Caco-2 (cell line): ENCODE measurements at regions of chr2 and their contacts with region 1.

Region 1: DNA sequence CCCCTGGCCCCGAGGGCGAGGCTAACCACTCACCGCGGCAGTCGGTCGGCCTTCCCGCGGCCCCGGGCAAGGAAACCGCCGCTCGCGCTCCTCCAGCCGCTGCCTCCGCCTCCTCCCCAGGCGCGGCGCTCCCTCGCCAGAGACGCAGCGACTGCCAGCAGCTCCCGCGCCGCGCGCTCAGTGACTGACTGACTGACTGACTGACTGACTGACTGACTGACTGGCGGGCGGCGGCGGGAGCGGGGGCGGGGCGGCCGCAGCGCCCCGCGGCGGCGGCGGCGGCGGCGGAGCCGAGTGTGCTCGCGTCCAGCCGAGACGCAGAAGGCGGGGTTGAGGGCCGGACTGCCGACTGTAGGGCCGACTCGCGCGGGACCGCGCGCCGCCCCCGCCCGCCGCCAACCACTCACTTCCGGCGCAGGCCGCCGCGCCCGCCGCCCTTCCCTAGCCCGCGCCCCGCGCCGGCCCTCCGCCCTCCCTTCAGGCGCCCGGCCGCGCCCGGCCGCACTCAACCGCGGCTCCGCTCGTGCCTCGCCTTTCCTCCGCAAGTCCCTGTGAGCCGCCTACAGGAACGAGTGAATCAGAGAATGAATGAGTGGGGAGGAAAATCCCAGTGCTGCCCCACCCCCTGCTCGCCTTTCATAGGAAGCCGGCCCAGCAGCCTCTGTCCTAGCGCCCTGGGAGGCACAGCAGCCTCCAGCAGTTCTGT is at the start of gene RAPH1:
- DNase-seq: peak; percentile 92
- H3K4me3 ChIP-seq: peak within 1 kb of the TSS; percentile 84
- H3K4me3 Mint-ChIP-seq: peak within 1 kb of the TSS; percentile 97
- H3K27ac Mint-ChIP-seq: peak within 1 kb of the TSS; percentile 36
- H3K4me1 ChIP-seq: peaks cover 4% of the 10 kb centered on the region; the same call in 1 of the 2 replicates
- H3K4me1 Mint-ChIP-seq: peaks cover 14% of the 10 kb centered on the region
- H3K27me3 ChIP-seq: no peaks in the 10 kb centered on the region
- H3K27me3 Mint-ChIP-seq: no peaks in the 10 kb centered on the region
- CTCF ChIP-seq: no peak
- total RNA-seq, gene RAPH1: 109 and 114 TPM in 2 replicates

Region 2: DNA sequence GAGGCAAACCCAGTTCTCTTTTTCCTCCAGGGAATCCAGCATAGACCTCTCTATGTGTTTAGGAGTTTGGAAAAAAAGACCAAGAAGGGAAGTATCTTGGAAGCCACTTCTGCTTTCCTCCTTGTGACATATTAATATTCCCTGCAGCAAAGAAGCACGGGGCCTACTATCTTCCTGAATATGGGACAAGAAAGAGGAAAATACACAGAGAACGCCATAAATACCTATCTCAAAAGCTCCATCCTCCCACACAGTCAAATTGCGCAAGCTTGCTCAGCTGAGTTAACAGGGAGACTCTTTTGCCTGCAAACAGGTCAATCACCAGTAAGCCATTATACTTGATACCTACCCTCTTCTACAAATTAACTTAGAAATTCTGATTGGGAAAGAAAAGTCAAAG is 16.5 kb after region 1 on chr2:
- CTCF ChIA-PET with region 1: no interaction called
- POLR2A ChIA-PET with region 1: no interaction called
- intact Hi-C with region 1: loop called (anchors 1 kb)
- DNase-seq: peak; percentile 87 to 95
- H3K4me3 ChIP-seq: no peak overlapping the region
- H3K4me3 Mint-ChIP-seq: peak overlapping the region; percentile 57
- H3K27ac Mint-ChIP-seq: peak overlapping the region; percentile 55
- H3K4me1 ChIP-seq: peaks cover 26% of the 10 kb centered on the region
- H3K4me1 Mint-ChIP-seq: peaks cover 22% of the 10 kb centered on the region
- H3K27me3 ChIP-seq: no peaks in the 10 kb centered on the region
- H3K27me3 Mint-ChIP-seq: no peaks in the 10 kb centered on the region
- CTCF ChIP-seq: no peak

Region 3: GRCh38 chr2:203578759-203579643 is 43.8 kb after region 1 on chr2:
- CTCF ChIA-PET with region 1: no interaction called
- POLR2A ChIA-PET with region 1: no interaction called
- intact Hi-C with region 1: loop called (anchors 1 kb)
- DNase-seq: peak; percentile 89 to 92
- H3K4me3 ChIP-seq: no peak overlapping the region
- H3K4me3 Mint-ChIP-seq: peak overlapping the region; percentile 4
- H3K27ac Mint-ChIP-seq: peak overlapping the region; percentile 88
- H3K4me1 ChIP-seq: peaks cover 30% of the 10 kb centered on the region
- H3K4me1 Mint-ChIP-seq: peaks cover 21% of the 10 kb centered on the region
- H3K27me3 ChIP-seq: no peaks in the 10 kb centered on the region
- H3K27me3 Mint-ChIP-seq: no peaks in the 10 kb centered on the region
- CTCF ChIP-seq: no peak

Region 4: GRCh38 chr2:203590496-203590895 is 55.3 kb after region 1 on chr2:
- CTCF ChIA-PET with region 1: no interaction called
- POLR2A ChIA-PET with region 1: no interaction called
- intact Hi-C with region 1: no loop called
- DNase-seq: no peak
- H3K4me3 ChIP-seq: no peak overlapping the region
- H3K4me3 Mint-ChIP-seq: no peak overlapping the region
- H3K27ac Mint-ChIP-seq: no peak overlapping the region
- H3K4me1 ChIP-seq: peaks cover 4% of the 10 kb centered on the region
- H3K4me1 Mint-ChIP-seq: peaks cover 14% of the 10 kb centered on the region
- H3K27me3 ChIP-seq: no peaks in the 10 kb centered on the region
- H3K27me3 Mint-ChIP-seq: no peaks in the 10 kb centered on the region
- CTCF ChIP-seq: no peak

Region 5: DNA sequence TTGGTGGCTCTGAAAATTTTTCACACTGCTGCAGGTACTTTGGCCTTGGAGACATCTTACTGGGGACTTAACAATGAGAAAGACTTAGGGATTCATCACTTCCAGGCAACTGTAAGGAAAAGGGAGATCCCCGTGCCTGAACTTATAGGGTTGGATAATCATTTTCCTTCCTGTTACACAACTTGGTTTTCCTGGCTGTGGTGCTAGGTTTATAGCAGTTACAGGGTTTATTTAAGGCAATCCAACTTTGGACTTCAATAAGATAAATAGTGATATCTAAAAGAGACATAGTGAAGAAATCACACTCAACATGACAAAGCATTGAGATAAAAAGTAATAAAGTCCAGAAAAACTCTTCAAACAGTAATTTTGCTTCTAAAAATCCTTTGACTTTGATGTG is 70.1 kb after region 1 on chr2:
- CTCF ChIA-PET with region 1: no interaction called
- POLR2A ChIA-PET with region 1: no interaction called
- intact Hi-C with region 1: loop called (anchors 5 kb)
- DNase-seq: peak; percentile 34 to 36
- H3K4me3 ChIP-seq: no peak overlapping the region
- H3K4me3 Mint-ChIP-seq: no peak overlapping the region
- H3K27ac Mint-ChIP-seq: no peak overlapping the region
- H3K4me1 ChIP-seq: peaks cover 18% of the 10 kb centered on the region; the same call in 1 of the 2 replicates
- H3K4me1 Mint-ChIP-seq: peaks cover 5% of the 10 kb centered on the region
- H3K27me3 ChIP-seq: no peaks in the 10 kb centered on the region
- H3K27me3 Mint-ChIP-seq: no peaks in the 10 kb centered on the region
- CTCF ChIP-seq: no peak

Region 6: GRCh38 chr2:203706403-203706802 is 171.2 kb after region 1 on chr2 and contains the start of gene CD28:
- CTCF ChIA-PET with region 1: no interaction called
- POLR2A ChIA-PET with region 1: no interaction called
- intact Hi-C with region 1: no loop called
- DNase-seq: no peak
- H3K4me3 ChIP-seq: no peak within 1 kb of the TSS
- H3K4me3 Mint-ChIP-seq: no peak within 1 kb of the TSS
- H3K27ac Mint-ChIP-seq: peak within 1 kb of the TSS; percentile 36
- H3K4me1 ChIP-seq: peaks cover 33% of the 10 kb centered on the region
- H3K4me1 Mint-ChIP-seq: peaks cover 24% of the 10 kb centered on the region
- H3K27me3 ChIP-seq: no peaks in the 10 kb centered on the region
- H3K27me3 Mint-ChIP-seq: no peaks in the 10 kb centered on the region
- CTCF ChIP-seq: no peak
- total RNA-seq, gene CD28: 0.30 and 0.84 TPM in 2 replicates